ENCODE measurements at regions of chr21 and their contacts with region 1.

Region 1: DNA sequence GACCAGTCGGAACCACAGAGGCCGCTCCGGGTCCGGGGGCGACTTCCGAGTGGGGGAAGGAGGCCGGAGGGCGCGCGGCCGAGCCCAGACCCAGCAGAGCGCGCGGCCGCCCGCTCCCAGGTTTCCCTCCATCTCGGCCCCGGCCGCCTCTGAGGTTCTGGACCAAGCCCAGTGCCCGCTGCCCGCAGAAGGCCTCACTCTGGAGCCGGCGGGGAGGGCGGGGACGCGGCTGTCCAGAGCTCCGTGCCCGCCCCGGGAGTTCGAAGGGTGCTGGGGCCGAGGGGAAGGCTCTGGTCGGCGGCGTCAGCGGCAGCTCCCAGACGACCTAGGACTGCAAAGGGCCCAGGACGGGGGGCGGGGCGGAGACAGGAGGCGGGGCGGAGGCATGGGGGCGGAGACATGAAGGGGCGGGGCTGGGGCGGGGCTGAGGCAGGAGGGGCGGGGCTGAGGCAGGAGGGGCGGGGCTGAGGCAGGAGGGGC is 48.0 kb upstream of the SLC19A1 start:
- DNase-seq: peak; percentile 84
- H3K4me3 Mint-ChIP-seq: peak overlapping the region; percentile 52
- H3K27ac Mint-ChIP-seq: no peak overlapping the region
- H3K4me1 Mint-ChIP-seq: peaks cover 16% of the 10 kb centered on the region
- H3K27me3 Mint-ChIP-seq: peaks cover 17% of the 10 kb centered on the region

Region 2: DNA sequence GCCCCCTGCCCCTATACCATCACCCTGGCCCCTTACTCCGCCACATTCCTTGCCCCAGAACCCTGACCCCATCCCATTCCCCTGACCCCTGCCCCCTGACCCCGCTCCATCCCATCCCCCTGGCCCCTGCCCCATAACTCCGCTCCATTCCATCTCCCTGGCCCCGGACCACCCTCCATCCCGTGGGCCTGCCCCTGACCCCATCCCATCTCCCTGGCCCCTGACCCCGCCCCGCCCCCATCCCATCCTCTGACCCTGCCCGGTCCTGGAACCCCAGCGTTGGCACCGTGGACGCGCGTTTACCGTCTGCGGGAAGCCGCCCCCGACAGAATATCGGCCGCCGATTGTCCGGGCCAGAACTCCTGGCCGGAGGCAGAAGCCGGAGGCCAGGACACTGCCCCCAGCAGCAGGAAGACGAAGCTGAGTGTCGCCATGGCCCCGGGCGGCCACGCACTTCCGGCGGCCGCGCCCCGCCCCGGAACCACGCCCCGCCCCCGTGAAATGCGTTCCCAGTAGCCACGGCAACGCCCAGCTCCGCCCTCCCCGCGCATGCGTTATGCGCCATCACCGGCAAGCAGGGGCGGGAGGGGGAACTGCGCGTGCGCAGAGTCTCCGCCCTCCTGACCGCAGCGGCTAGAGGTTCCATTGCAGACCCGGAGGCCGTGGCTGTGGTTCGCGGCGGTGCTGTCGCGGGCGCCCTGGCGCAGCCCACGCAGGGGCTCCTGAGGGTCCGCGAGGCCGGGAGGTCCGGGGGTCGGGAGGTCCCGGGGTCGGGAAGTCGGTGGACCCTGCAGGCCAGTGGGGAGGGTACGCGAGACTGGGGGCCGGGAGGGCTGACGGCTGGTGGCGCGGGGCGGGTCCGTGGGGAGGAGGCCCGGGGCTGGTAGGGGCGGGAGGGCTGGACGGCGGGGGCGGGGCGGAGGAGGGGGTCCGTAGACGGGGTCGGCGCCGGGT is 302.6 kb before region 1 on chr21 and contains the start of gene POFUT2:
- CTCF ChIA-PET with region 1: interaction called, 3 read pairs
- POLR2A ChIA-PET with region 1: no interaction called
- intact Hi-C with region 1: loop called (anchors 5 kb)
- DNase-seq: peak; percentile 99
- H3K4me3 Mint-ChIP-seq: peak within 1 kb of the TSS; percentile 77
- H3K27ac Mint-ChIP-seq: peak within 1 kb of the TSS; percentile 69
- H3K4me1 Mint-ChIP-seq: peaks cover 24% of the 10 kb centered on the region
- H3K27me3 Mint-ChIP-seq: no peaks in the 10 kb centered on the region
- total RNA-seq, gene POFUT2: 14.3 TPM

Region 3: GRCh38 chr21:45607021-45607908 is 17.0 kb after region 1 on chr21:
- CTCF ChIA-PET with region 1: interaction called, 3 read pairs
- POLR2A ChIA-PET with region 1: no interaction called
- intact Hi-C with region 1: loop called (anchors 1 kb)
- DNase-seq: peak; percentile 72
- H3K4me3 Mint-ChIP-seq: peak overlapping the region; percentile 58
- H3K27ac Mint-ChIP-seq: peak overlapping the region; percentile 85
- H3K4me1 Mint-ChIP-seq: peaks cover 13% of the 10 kb centered on the region
- H3K27me3 Mint-ChIP-seq: no peaks in the 10 kb centered on the region

Region 4: DNA sequence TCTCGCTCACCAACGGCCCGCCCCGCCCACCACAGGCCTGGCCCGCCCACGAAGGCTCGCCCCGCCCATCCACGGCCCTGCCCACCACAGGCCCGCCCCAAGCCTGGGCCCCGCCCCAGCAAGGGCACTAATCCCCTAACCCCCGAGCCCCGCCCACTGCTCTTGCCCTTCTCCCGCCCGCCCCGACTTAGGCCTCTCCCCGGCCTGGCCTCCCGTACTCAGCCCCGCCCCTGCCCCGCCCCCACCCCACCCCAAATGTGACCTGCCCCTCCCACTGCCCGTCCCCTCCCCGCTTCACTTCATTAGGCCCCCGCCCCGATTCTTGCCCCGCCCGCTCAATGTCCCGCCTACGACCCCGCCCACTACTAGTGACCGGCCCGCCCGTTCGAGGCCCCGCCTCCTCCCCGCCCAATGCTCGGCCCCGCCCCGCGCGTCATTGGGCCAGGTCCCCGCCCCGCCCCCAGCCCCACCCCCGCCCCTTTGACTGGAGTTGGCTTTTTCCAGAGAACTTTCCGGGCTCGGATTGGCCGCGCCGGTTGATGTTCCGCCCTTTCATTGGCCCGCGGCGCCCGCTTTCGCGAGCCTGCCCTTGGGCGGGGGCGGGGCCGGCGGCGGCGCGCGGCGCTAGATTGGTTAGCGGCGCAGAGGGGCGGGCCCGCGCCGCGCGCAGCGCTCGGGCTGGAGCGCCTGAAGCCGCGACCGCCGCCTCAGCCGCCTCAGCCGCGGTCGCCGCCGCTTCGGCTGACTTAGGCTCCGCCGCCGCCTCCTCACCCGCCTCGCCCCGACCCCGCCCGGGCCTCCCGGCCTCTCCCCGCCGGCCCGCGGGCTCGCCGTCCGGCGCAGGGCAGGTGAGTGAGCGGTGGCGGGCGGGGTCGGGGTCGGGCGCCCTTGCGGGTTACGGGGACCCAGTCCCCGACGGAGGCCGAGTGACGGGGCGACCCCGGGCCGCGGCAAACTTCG is 53.0 kb after region 1 on chr21 and contains the start of gene PCBP3:
- CTCF ChIA-PET with region 1: interaction called, 3 read pairs
- POLR2A ChIA-PET with region 1: no interaction called
- intact Hi-C with region 1: loop called (anchors 1 kb)
- DNase-seq: peak; percentile 98
- H3K4me3 Mint-ChIP-seq: peak within 1 kb of the TSS; percentile 71
- H3K27ac Mint-ChIP-seq: peak within 1 kb of the TSS; percentile 49
- H3K4me1 Mint-ChIP-seq: peaks cover 25% of the 10 kb centered on the region
- H3K27me3 Mint-ChIP-seq: peaks cover 18% of the 10 kb centered on the region
- total RNA-seq, gene PCBP3: 5.3 to 6.6 TPM

Region 5: DNA sequence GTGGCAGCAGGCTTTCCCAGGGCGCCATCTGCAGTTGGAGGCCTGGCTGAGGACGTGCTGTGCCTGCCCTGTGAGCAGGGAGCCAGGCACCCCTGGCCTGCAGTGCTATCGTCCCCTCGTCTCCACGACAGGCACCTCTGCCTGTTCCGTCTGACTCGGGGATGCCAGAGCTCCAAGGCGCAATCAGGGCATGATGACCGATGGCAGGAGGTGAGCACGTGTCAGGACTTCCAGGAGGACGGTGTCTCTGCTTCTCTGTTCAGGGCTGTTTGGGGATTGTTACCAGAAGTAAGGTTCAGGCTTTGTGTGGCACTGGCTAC is 178.4 kb after region 1 on chr21:
- CTCF ChIA-PET with region 1: no interaction called
- POLR2A ChIA-PET with region 1: no interaction called
- intact Hi-C with region 1: loop called (anchors 1 kb)
- DNase-seq: peak; percentile 48
- H3K4me3 Mint-ChIP-seq: peak overlapping the region; percentile 31
- H3K27ac Mint-ChIP-seq: peak overlapping the region; percentile 87
- H3K4me1 Mint-ChIP-seq: peaks cover 41% of the 10 kb centered on the region
- H3K27me3 Mint-ChIP-seq: no peaks in the 10 kb centered on the region